ENCODE measurements at regions of chr6 and their contacts with region 1.

Region 1: GRCh38 chr6:89940225-89941027 is 46.2 kb downstream of the GJA10 start:
- DNase-seq: peak; percentile 85
- ATAC-seq: peak; percentile 80
- H3K4me3 Mint-ChIP-seq: no peak overlapping the region
- H3K27ac Mint-ChIP-seq: peak overlapping the region; percentile 73
- H3K4me1 Mint-ChIP-seq: peaks cover 57% of the 10 kb centered on the region
- H3K27me3 Mint-ChIP-seq: no peaks in the 10 kb centered on the region
- CTCF ChIP-seq: peak; percentile 83

Region 2: DNA sequence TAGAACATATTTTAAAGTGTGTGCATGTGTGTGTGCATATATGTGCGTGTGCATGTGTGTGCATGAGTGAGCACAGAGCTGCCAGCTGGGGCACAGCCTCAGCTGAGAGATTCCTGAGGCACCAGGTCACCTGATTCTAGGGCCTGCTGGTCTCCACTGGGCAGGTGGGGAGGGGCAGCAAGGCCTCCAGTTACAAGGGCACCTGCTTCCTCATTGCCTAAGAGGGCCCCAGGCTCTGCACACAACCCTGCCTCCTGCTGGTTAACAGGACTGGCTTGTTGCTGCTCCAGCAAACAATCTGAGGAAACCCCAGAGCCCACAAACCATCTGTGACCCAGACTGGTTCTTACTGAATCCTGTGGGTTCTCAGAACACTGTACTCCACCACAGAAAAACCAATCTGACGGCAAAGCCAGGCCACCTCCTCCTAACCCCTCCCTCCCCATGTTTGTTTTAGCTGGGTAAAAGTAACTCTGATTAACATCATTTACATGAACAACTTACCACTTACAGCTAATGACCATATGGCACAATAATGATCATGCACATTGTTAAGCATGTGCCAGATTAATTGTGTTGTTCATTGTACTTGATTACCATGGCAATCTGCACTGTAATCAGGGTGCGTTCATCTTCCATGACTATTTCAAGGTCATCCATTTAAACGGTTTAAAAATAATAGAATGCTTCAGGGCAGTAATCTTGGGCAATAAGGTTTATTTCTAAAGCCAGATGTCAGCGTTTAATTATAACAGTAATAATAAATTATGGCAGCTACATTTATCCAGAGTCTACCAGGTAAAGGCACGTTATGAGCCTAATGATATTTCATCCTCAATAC is 564.8 kb before region 1 on chr6:
- CTCF ChIA-PET with region 1: no interaction called
- POLR2A ChIA-PET with region 1: no interaction called
- intact Hi-C with region 1: no loop called
- DNase-seq: peak; percentile 85
- ATAC-seq: peak; percentile 88
- H3K4me3 Mint-ChIP-seq: no peak overlapping the region
- H3K27ac Mint-ChIP-seq: no peak overlapping the region
- H3K4me1 Mint-ChIP-seq: peaks cover 19% of the 10 kb centered on the region
- H3K27me3 Mint-ChIP-seq: no peaks in the 10 kb centered on the region
- CTCF ChIP-seq: peak; percentile 24

Region 3: GRCh38 chr6:89775150-89775549 is 165.3 kb before region 1 on chr6:
- CTCF ChIA-PET with region 1: no interaction called
- POLR2A ChIA-PET with region 1: no interaction called
- intact Hi-C with region 1: no loop called
- DNase-seq: no peak
- ATAC-seq: no peak
- H3K4me3 Mint-ChIP-seq: no peak overlapping the region
- H3K27ac Mint-ChIP-seq: peak overlapping the region; percentile 26
- H3K4me1 Mint-ChIP-seq: no peaks in the 10 kb centered on the region
- H3K27me3 Mint-ChIP-seq: no peaks in the 10 kb centered on the region
- CTCF ChIP-seq: no peak

Region 4: GRCh38 chr6:89866024-89866678 is 74.3 kb before region 1 on chr6:
- CTCF ChIA-PET with region 1: no interaction called
- POLR2A ChIA-PET with region 1: no interaction called
- intact Hi-C with region 1: no loop called
- DNase-seq: no peak
- ATAC-seq: no peak
- H3K4me3 Mint-ChIP-seq: no peak overlapping the region
- H3K27ac Mint-ChIP-seq: no peak overlapping the region
- H3K4me1 Mint-ChIP-seq: peaks cover 9% of the 10 kb centered on the region
- H3K27me3 Mint-ChIP-seq: no peaks in the 10 kb centered on the region
- CTCF ChIP-seq: no peak

Region 5: DNA sequence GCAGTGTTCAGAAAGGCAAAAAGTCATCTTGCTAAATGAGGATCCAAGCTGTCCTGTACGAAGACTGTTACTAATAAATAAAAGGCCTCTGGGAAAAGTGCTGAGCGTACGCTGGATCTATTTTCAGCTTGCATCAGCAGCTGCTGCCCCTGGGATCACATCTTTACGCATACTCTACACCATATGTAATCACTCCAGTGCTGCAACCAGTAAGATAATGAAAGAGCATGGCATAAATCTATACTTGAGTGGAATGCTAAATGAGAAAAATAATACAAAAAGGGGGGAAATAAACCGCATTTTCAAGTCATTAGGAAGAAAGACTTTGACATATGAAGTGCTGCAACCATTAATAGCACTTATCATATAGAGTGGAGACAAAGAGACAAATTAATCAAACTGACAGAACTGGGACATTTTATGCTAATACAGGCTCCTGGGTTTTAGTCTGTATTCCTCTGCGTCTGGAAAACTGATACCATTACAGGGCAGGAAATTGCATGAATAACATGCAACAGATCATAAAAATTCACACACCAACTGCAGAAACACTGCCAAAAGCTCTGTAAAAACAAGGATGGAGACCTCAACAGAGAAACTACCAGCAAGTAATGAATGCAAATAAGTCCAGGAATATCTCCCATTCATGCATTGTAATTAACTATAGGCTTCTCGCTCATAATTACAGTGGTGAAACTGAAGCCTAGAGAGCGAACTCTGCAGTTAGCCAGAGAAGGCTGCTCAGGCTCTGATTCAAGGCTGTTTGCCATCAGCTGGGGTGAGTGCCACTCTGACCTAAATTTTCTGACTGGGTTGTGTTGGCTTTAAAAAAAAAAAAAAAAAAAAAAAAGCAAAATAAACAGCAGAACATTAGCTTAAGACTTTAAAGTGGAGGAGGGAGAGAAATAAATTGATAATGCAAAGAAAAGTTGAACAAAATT is 37.7 kb after region 1 on chr6:
- CTCF ChIA-PET with region 1: interaction called, 11 read pairs
- POLR2A ChIA-PET with region 1: no interaction called
- intact Hi-C with region 1: no loop called
- DNase-seq: no peak
- ATAC-seq: no peak
- H3K4me3 Mint-ChIP-seq: no peak overlapping the region
- H3K27ac Mint-ChIP-seq: no peak overlapping the region
- H3K4me1 Mint-ChIP-seq: peaks cover 51% of the 10 kb centered on the region
- H3K27me3 Mint-ChIP-seq: no peaks in the 10 kb centered on the region
- CTCF ChIP-seq: no peak

Region 6: GRCh38 chr6:90062667-90063066 is 122.2 kb after region 1 on chr6:
- CTCF ChIA-PET with region 1: interaction called, 10 read pairs
- POLR2A ChIA-PET with region 1: interaction called, 3 read pairs
- intact Hi-C with region 1: no loop called
- DNase-seq: no peak
- ATAC-seq: no peak
- H3K4me3 Mint-ChIP-seq: no peak overlapping the region
- H3K27ac Mint-ChIP-seq: no peak overlapping the region
- H3K4me1 Mint-ChIP-seq: peaks cover 53% of the 10 kb centered on the region
- H3K27me3 Mint-ChIP-seq: no peaks in the 10 kb centered on the region
- CTCF ChIP-seq: no peak

Region 7: DNA sequence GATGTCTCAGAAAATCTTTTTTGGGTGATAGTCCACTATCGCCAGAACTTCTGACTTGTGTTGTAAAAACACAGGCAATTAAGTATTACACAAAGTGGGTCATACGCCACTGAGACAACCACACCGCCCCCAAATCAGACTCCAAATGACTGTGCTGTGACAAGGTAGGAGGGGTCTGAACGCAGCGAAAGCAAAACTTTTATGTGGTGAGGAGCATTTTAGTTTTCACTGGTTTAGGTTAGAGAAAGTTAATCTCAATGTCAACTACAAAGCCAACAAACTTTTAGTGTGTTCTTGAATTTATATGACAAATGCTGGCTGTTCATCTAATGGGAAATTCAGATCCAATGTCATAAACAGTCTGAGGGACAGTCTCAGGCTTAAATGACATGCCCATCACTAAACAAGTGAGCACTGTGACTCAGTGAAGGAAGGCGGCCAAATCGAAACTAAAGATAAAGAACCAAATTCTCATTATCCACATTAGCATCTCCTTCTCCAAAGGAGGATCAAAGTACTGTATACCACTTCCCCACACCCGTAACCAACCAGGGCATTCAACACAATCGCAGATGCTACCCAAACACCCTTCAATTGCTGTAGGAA is 140.6 kb after region 1 on chr6:
- CTCF ChIA-PET with region 1: interaction called, 11 read pairs
- POLR2A ChIA-PET with region 1: no interaction called
- intact Hi-C with region 1: no loop called
- DNase-seq: peak; percentile 96
- ATAC-seq: peak; percentile 62
- H3K4me3 Mint-ChIP-seq: peak overlapping the region; percentile 96
- H3K27ac Mint-ChIP-seq: peak overlapping the region; percentile 99
- H3K4me1 Mint-ChIP-seq: peaks cover 72% of the 10 kb centered on the region
- H3K27me3 Mint-ChIP-seq: no peaks in the 10 kb centered on the region
- CTCF ChIP-seq: no peak

Region 8: GRCh38 chr6:90107771-90108282 is 167.4 kb after region 1 on chr6:
- CTCF ChIA-PET with region 1: interaction called, 12 read pairs
- POLR2A ChIA-PET with region 1: no interaction called
- intact Hi-C with region 1: no loop called
- DNase-seq: peak; percentile 69
- ATAC-seq: peak; percentile 34
- H3K4me3 Mint-ChIP-seq: peak overlapping the region; percentile 19
- H3K27ac Mint-ChIP-seq: peak overlapping the region; percentile 83
- H3K4me1 Mint-ChIP-seq: peaks cover 96% of the 10 kb centered on the region
- H3K27me3 Mint-ChIP-seq: no peaks in the 10 kb centered on the region
- CTCF ChIP-seq: no peak

Region 9: DNA sequence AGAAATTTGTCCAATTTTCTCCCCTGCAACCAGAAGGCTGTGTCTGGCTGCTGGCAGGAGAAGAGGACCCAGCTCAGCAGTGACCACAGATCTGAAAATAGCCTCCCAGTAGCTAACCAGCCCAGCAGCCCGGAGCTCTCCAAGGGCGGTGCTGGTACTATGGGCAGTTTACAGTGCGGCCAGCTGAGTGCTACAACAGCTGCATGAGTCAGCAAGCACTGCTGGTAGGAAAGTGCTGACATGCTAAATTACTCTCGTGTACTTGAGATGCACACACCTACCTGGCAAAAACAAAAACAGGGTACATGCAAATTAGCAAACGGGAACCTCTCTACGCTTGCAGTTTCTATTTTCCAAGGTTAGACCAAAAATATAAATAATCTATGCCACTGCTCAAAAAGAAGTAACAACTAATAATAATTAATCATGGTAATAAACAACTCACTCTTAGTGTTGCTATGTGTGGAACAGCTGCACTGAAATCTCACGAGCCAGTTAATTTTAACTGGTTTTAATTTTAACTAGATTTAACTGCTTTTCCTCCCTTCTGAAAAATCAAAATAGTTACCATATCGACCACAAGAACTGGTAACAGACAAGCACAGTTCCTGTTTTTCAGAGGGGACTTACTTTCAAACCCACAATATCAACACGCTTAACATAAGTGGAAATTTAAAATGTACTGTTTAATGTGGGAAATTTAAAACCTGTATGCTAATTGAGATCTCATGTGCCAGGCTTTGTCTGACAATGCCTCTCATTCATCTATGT is 345.4 kb after region 1 on chr6:
- CTCF ChIA-PET with region 1: interaction called, 16 read pairs
- POLR2A ChIA-PET with region 1: no interaction called
- intact Hi-C with region 1: loop called (anchors 5 kb)
- DNase-seq: peak; percentile 80
- ATAC-seq: peak; percentile 40
- H3K4me3 Mint-ChIP-seq: peak overlapping the region; percentile 64
- H3K27ac Mint-ChIP-seq: peak overlapping the region; percentile 94
- H3K4me1 Mint-ChIP-seq: peaks cover 87% of the 10 kb centered on the region
- H3K27me3 Mint-ChIP-seq: no peaks in the 10 kb centered on the region
- CTCF ChIP-seq: no peak

Region 10: GRCh38 chr6:90478789-90479602 is 538.6 kb after region 1 on chr6:
- CTCF ChIA-PET with region 1: interaction called, 45 read pairs
- POLR2A ChIA-PET with region 1: interaction called, 5 read pairs
- intact Hi-C with region 1: loop called (anchors 2 kb)
- DNase-seq: peak; percentile 90
- ATAC-seq: peak; percentile 90
- H3K4me3 Mint-ChIP-seq: no peak overlapping the region
- H3K27ac Mint-ChIP-seq: peak overlapping the region; percentile 66
- H3K4me1 Mint-ChIP-seq: peaks cover 52% of the 10 kb centered on the region
- H3K27me3 Mint-ChIP-seq: no peaks in the 10 kb centered on the region
- CTCF ChIP-seq: peak; percentile 97

Measured in activated CD8-positive, alpha-beta T cell treated with anti-CD3 and anti-CD28 coated beads for 36 hours (primary cell).